ENCODE measurements at regions of chr3 and their contacts with region 1.

Region 1: DNA sequence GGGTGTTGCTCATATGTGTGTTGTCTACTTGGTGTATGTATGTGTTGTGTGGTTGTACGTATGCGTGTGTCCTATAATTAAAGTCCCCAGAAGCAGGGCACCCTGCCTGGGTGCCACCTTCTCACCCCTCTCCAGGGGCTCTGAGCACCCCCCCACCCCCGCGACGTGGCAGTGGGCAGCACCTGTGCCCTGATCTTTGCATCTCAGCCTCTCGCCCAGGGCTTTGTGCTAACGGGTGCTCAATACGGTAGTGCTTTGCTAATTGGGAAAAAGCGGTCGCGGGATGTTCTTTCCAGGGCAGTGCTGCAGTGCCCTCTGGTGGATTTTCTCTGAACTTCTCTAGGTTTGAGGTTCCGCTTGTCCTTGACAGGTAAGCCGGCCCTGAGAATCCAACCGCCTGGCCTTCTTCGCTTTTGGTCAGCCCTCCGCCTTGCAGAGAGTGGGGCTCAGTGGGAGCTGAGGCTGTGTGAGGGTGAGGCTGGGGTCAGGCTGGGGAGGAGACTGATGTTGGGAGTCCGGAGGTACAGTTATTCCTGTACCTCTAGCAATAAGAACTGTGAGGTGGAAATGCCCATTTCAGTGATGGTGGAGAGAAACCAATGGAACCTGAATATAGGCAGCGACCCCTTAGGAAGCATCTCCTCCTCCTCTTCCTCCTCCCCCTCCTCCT is 17.6 kb upstream of the EPHB3 start:
- DNase-seq: peak; percentile 87
- ATAC-seq: peak; percentile 65
- H3K4me3 Mint-ChIP-seq: no peak overlapping the region
- H3K27ac Mint-ChIP-seq: no peak overlapping the region
- H3K4me1 Mint-ChIP-seq: peaks cover 26% of the 10 kb centered on the region
- H3K27me3 Mint-ChIP-seq: peaks cover 6% of the 10 kb centered on the region; the same call in 1 of the 2 replicates
- CTCF ChIP-seq: peak; percentile 86

Region 2: GRCh38 chr3:184354121-184354728 is 189.8 kb before region 1 on chr3:
- CTCF ChIA-PET with region 1: interaction called, 12 read pairs
- POLR2A ChIA-PET with region 1: no interaction called
- DNase-seq: peak; percentile 74
- ATAC-seq: peak; percentile 72
- H3K4me3 Mint-ChIP-seq: no peak overlapping the region
- H3K27ac Mint-ChIP-seq: no peak overlapping the region
- H3K4me1 Mint-ChIP-seq: peaks cover 12% of the 10 kb centered on the region
- H3K27me3 Mint-ChIP-seq: no peaks in the 10 kb centered on the region
- CTCF ChIP-seq: peak; percentile 67

Region 3: DNA sequence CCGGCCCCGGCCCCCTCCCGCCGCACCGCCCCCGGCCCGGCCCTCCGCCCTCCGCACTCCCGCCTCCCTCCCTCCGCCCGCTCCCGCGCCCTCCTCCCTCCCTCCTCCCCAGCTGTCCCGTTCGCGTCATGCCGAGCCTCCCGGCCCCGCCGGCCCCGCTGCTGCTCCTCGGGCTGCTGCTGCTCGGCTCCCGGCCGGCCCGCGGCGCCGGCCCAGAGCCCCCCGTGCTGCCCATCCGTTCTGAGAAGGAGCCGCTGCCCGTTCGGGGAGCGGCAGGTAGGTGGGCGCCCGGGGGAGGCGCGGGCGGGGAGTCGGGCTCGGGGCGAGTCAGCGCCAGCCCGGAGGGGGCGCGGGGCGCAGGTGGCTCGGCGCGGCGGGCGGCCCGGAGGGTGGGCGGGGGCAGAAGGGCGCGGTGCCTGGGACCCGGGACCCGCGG is 163.8 kb before region 1 on chr3:
- CTCF ChIA-PET with region 1: interaction called, 33 read pairs
- POLR2A ChIA-PET with region 1: no interaction called
- DNase-seq: peak; percentile 74
- ATAC-seq: peak; percentile 17
- H3K4me3 Mint-ChIP-seq: no peak overlapping the region
- H3K27ac Mint-ChIP-seq: no peak overlapping the region
- H3K4me1 Mint-ChIP-seq: peaks cover 43% of the 10 kb centered on the region
- H3K27me3 Mint-ChIP-seq: peaks cover 63% of the 10 kb centered on the region
- CTCF ChIP-seq: no peak

Region 4: GRCh38 chr3:184469423-184469822 is 74.6 kb before region 1 on chr3:
- CTCF ChIA-PET with region 1: interaction called, 57 read pairs
- POLR2A ChIA-PET with region 1: no interaction called
- DNase-seq: peak; percentile 86
- ATAC-seq: peak; percentile 89
- H3K4me3 Mint-ChIP-seq: no peak overlapping the region
- H3K27ac Mint-ChIP-seq: no peak overlapping the region
- H3K4me1 Mint-ChIP-seq: peaks cover 11% of the 10 kb centered on the region; the same call in 1 of the 2 replicates
- H3K27me3 Mint-ChIP-seq: no peaks in the 10 kb centered on the region
- CTCF ChIP-seq: peak; percentile 59

Region 5: GRCh38 chr3:184513276-184514170 is 30.5 kb before region 1 on chr3:
- CTCF ChIA-PET with region 1: interaction called, 104 read pairs
- POLR2A ChIA-PET with region 1: interaction called, 7 read pairs
- DNase-seq: peak; percentile 95
- ATAC-seq: peak; percentile 95
- H3K4me3 Mint-ChIP-seq: peak overlapping the region; percentile 71
- H3K27ac Mint-ChIP-seq: no peak overlapping the region
- H3K4me1 Mint-ChIP-seq: peaks cover 30% of the 10 kb centered on the region
- H3K27me3 Mint-ChIP-seq: peaks cover 54% of the 10 kb centered on the region
- CTCF ChIP-seq: peak; percentile 79

Region 6: DNA sequence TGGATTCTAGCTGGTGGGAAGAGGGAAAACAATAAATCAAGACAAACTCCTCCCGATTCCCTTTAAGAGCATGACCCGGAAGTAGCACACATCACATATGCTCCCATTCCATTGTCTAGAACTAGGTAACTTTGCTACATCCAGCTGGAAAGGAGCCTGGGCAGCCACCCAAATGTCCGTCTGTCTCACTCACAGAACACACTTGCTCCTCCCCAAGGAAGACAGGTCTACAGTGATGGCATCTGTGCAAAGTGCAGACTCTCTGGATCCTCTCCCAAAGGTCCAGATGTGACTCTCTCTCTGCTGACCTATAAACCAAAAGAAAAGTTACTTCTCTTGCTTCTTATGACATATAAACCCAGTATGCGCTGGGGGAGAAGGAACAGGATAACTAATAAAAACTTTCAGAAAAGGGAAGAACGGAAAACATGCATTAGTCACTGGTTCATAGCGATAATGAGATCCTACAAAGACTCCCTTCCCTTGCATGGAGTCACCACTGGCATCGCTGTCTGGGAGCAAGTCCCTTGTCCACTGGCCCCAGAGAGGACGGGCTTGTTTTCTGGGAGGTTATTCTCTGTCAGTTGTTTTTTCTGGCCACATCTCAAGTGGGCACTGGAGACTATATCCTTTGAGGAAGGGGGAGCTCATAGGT is 12.2 kb before region 1 on chr3:
- CTCF ChIA-PET with region 1: interaction called, 45 read pairs
- POLR2A ChIA-PET with region 1: interaction called, 9 read pairs
- DNase-seq: no peak
- ATAC-seq: no peak
- H3K4me3 Mint-ChIP-seq: no peak overlapping the region
- H3K27ac Mint-ChIP-seq: no peak overlapping the region
- H3K4me1 Mint-ChIP-seq: peaks cover 5% of the 10 kb centered on the region
- H3K27me3 Mint-ChIP-seq: peaks cover 4% of the 10 kb centered on the region
- CTCF ChIP-seq: no peak

Region 7: DNA sequence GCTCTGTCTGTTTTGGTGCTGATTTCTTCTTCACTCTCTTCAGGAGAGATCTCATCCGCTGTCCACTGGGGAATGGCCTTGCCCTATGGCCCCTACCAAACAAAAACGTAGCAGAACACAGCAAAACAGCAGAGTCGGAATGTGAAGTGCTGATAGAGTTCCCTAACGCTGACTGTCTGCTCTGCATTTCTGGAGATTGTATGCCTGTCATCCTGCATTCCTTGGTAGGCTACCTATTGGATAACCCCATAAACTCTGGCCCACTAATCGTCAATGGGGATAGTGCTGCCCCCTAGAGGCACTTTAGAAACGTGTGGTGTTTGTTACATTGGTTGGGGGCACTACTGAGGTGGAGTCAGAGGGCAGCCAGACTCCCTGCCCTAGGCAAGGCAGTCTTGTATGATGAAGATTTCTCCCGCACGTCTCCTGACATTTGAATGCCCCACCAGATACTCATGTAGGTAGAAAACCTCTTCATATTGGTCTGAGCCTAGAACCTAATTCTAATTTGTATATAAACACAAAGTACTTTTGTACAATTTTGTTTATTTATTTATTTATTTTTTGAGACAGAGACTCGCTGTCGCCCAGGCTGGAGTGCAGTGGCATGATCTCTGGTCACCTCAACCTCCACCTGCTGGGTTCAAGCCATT is 183.5 kb after region 1 on chr3:
- CTCF ChIA-PET with region 1: no interaction called
- POLR2A ChIA-PET with region 1: no interaction called
- DNase-seq: peak; percentile 78
- ATAC-seq: peak; percentile 99
- H3K4me3 Mint-ChIP-seq: no peak overlapping the region
- H3K27ac Mint-ChIP-seq: no peak overlapping the region
- H3K4me1 Mint-ChIP-seq: peaks cover 16% of the 10 kb centered on the region
- H3K27me3 Mint-ChIP-seq: no peaks in the 10 kb centered on the region
- CTCF ChIP-seq: peak; percentile 69